ENCODE measurements at regions of chr11 and their contacts with region 1.

Region 1: DNA sequence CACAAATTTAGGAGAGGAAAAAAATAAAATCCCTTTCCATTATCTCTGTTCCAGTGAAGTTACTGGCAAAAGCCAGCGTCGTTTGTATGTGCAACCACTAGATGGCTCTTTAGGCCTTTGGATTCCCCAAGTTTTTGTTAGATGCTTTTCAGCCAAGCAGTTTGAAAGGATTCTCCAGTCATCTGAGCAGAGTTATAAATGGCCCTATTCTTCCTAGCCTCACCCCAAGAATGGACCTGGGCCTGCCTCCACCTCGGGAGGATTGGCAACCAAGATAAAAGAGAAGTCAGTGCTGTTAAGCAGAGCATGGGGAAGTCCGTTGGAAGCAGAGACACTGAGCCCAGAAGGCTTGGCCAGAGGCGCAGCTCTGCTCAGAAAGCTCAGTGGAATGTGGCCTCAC is 15.4 kb downstream of the FAM181B start:
- DNase-seq: no peak
- H3K4me3 ChIP-seq: no peak overlapping the region
- H3K27ac ChIP-seq: peak overlapping the region in 1 of 2 donors; percentile 5
- H3K4me1 ChIP-seq: peaks cover 0 to 21% of the 10 kb centered on the region in 2 donors
- H3K27me3 ChIP-seq: no peaks in the 10 kb centered on the region
- CTCF ChIP-seq: peak; percentile 60 to 82 (median 62)

Region 2: GRCh38 chr11:82663535-82663934 is 54.8 kb before region 1 on chr11:
- intact Hi-C with region 1: no loop called
- DNase-seq: no peak
- H3K4me3 ChIP-seq: no peak overlapping the region
- H3K27ac ChIP-seq: no peak overlapping the region
- H3K4me1 ChIP-seq: no peaks in the 10 kb centered on the region
- H3K27me3 ChIP-seq: no peaks in the 10 kb centered on the region
- CTCF ChIP-seq: no peak

Region 3: GRCh38 chr11:83193315-83194280 is 475.3 kb after region 1 on chr11 and contains the start of gene ANKRD42:
- intact Hi-C with region 1: loop called (anchors 5 kb)
- DNase-seq: peak; percentile 78 to 97
- H3K4me3 ChIP-seq: peak within 1 kb of the TSS; percentile 73 to 93
- H3K27ac ChIP-seq: peak within 1 kb of the TSS; percentile 86 to 92
- H3K4me1 ChIP-seq: peaks cover 4 to 23% of the 10 kb centered on the region in 2 donors
- H3K27me3 ChIP-seq: no peaks in the 10 kb centered on the region
- CTCF ChIP-seq: no peak
- total RNA-seq, gene ANKRD42: 25.1 TPM

Measured in ascending aorta (tissue), 2 donors.